WTC11 (cell line): ENCODE measurements at regions of chr7 and their contacts with region 1.

Region 1: DNA sequence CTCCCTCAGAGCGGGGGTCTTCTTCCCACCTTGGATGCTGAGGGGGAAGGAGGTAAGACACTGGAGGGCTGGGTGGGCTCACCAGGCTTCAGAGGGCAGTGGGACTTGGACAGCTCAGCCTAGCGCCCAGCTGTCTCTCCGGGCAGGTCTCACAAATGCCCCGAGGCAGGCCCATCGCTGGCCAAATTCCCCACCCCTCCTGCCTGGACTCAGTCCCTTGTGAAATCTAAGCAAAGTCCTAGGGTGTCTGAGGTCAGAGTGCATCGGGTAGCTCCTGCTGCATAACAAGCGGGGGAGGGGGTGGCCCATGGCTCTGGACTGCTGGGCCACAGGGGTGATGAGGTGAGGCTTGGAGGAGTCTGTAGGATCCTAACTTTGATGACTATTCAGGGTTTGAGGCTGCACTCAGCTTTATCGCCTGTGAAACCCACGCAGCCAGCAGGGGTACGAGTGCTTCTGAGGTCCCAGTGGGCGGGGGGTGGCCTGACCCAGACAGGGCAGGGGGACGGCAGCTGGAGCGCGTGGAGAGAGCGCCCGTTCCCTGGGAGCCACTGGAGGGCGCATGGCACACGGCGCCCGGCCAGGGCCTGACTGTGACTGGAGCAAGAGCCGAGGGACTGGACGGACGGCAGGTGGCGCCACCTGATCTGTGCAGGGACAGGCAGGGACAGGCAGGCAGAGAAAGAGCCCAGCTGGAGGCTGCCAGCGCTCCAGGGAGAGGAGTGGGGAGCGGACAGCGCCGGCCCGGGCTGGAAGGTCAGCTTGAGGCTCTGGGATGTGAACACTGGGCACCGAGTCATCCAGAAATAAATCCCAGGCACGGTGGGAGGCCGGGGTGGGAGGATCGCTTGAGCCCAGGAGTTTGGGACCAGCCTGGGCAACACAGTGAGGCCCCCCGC is 10.0 kb downstream of the CYP2W1 start:
- DNase-seq: peak; percentile 99
- ATAC-seq: peak; percentile 91
- H3K4me3 Mint-ChIP-seq: no peak overlapping the region
- H3K27ac Mint-ChIP-seq: no peak overlapping the region
- H3K4me1 Mint-ChIP-seq: no peaks in the 10 kb centered on the region
- H3K27me3 Mint-ChIP-seq: no peaks in the 10 kb centered on the region
- CTCF ChIP-seq: peak; percentile 96

Region 2: DNA sequence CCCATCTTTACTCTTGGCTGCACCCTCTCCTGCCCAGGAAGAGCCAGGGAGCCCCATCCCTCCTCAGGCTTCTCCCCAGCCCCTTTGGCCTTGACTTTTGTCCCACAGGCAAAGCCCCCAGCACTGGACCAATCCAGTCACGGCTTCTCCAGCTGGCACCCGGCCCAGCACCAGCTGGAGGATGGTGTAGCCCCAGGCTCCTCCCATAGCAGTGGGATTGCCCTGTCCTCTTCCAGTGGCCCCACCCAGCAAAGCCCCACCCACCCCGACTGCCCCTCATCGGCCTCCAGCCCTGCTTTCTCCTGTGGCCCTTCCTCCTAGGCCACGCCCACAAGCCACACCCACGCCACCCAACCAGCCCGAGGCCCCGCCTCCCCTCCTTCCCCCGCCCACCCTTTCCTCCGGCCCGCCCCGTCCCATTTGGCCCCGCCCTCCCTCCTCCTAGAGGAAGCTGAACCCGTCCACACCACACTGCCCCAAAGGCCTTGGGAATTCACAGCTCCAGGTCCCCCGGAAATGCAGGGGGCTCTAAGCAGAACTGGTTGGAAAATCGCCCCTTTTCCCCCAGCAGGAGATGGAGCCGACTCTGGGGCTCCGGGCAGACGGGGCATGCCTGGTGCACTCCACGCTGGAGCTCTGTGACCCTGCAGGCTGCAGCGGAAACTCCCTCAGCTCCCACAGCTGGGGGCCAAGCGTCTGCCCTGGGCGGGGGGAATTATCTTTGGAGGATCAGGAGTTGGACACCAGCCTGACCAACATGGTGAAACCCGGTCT is 91.4 kb before region 1 on chr7:
- CTCF ChIA-PET with region 1: interaction called, 22 read pairs
- POLR2A ChIA-PET with region 1: no interaction called
- DNase-seq: peak; percentile 95
- ATAC-seq: peak; percentile 94
- H3K4me3 Mint-ChIP-seq: no peak overlapping the region
- H3K27ac Mint-ChIP-seq: no peak overlapping the region
- H3K4me1 Mint-ChIP-seq: no peaks in the 10 kb centered on the region
- H3K27me3 Mint-ChIP-seq: peaks cover 17% of the 10 kb centered on the region
- CTCF ChIP-seq: no peak

Region 3: GRCh38 chr7:1004018-1004852 is 11.3 kb after region 1 on chr7:
- CTCF ChIA-PET with region 1: interaction called, 21 read pairs
- POLR2A ChIA-PET with region 1: no interaction called
- DNase-seq: no peak
- ATAC-seq: no peak
- H3K4me3 Mint-ChIP-seq: no peak overlapping the region
- H3K27ac Mint-ChIP-seq: peak overlapping the region; percentile 83
- H3K4me1 Mint-ChIP-seq: no peaks in the 10 kb centered on the region
- H3K27me3 Mint-ChIP-seq: no peaks in the 10 kb centered on the region
- CTCF ChIP-seq: no peak

Region 4: DNA sequence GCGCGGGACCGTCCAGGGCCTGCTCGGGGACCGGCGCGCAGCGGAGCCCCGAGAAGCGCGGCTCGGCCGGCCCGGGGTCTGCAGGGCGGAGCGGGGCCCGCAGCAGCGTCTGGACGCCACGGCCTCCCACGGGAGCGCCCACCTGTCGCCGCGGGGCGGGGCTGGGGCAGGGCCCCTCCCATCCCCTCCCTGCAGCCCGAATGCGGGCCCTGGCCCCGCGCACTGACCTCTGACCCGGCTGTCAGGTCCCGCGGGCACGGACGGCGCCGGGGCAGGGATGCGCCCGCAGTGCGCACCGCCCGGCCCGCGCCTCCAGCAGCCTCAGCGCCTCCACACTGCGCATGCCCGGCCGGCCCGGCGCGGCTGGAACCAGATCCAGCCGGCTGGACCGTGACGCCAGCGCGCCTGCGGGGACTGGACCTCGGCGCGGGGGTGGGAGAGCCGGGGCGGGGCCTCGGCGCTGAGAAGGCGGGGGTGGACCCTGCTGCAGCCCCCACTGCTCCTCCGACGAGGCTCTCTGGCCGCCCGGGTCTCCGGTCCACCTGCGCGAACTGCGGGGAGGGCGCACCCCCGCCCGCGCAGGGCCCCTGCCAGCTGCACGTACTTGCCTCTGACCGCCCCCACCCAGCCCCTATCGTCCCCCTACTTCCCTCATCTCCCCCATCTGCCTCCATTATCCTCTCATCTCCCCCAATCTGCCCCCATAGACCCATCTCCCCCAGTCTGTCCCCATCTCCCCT is 35.2 kb after region 1 on chr7:
- CTCF ChIA-PET with region 1: interaction called, 22 read pairs
- POLR2A ChIA-PET with region 1: no interaction called
- DNase-seq: peak; percentile 86
- ATAC-seq: peak; percentile 80
- H3K4me3 Mint-ChIP-seq: no peak overlapping the region
- H3K27ac Mint-ChIP-seq: no peak overlapping the region
- H3K4me1 Mint-ChIP-seq: peaks cover 7% of the 10 kb centered on the region; the same call in 1 of the 2 replicates
- H3K27me3 Mint-ChIP-seq: no peaks in the 10 kb centered on the region
- CTCF ChIP-seq: no peak

Region 5: GRCh38 chr7:1059200-1060091 is 66.5 kb after region 1 on chr7:
- CTCF ChIA-PET with region 1: interaction called, 140 read pairs
- POLR2A ChIA-PET with region 1: no interaction called
- DNase-seq: peak; percentile 95
- ATAC-seq: peak; percentile 94
- H3K4me3 Mint-ChIP-seq: peak overlapping the region; percentile 64
- H3K27ac Mint-ChIP-seq: peak overlapping the region; percentile 80
- H3K4me1 Mint-ChIP-seq: peaks cover 10% of the 10 kb centered on the region
- H3K27me3 Mint-ChIP-seq: no peaks in the 10 kb centered on the region
- CTCF ChIP-seq: no peak

Region 6: DNA sequence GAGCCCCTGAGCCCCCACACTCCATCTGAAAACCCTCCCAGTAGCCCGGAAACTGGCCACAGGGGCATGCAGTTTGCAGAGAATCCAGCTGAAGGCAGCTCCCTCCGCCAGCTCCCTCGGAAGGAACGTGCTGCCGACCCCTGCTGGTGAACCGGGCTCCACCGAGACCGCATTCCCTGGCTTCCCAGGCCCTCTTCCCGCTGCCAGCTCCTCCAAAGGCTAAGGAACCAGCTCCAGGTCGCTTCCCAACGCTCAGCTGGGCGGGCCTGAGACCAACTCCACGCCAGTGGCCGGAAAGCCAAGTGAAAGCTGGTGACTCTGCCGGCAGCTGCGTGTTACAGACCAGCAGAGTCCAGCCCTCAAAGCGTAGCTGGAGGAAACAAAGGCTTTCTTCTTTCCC is 130.8 kb after region 1 on chr7:
- CTCF ChIA-PET with region 1: interaction called, 39 read pairs
- POLR2A ChIA-PET with region 1: no interaction called
- DNase-seq: peak; percentile 86
- ATAC-seq: peak; percentile 96
- H3K4me3 Mint-ChIP-seq: no peak overlapping the region
- H3K27ac Mint-ChIP-seq: peak overlapping the region; percentile 84; the same call in 1 of the 2 replicates
- H3K4me1 Mint-ChIP-seq: peaks cover 8% of the 10 kb centered on the region
- H3K27me3 Mint-ChIP-seq: no peaks in the 10 kb centered on the region
- CTCF ChIP-seq: no peak